ENCODE measurements at regions of chr15 and their contacts with region 1.

Region 1: GRCh38 chr15:92082006-92082843 is 228.7 kb downstream of the SLCO3A1 start:
- DNase-seq: peak; percentile 55
- H3K4me3 ChIP-seq: no peak overlapping the region
- CTCF ChIP-seq: peak; percentile 90

Region 2: GRCh38 chr15:91706322-91707032 is 375.7 kb before region 1 on chr15:
- in situ Hi-C with region 1: loop called (anchors 10 kb)
- DNase-seq: peak; percentile 35
- H3K4me3 ChIP-seq: no peak overlapping the region
- CTCF ChIP-seq: peak; percentile 94

Region 3: DNA sequence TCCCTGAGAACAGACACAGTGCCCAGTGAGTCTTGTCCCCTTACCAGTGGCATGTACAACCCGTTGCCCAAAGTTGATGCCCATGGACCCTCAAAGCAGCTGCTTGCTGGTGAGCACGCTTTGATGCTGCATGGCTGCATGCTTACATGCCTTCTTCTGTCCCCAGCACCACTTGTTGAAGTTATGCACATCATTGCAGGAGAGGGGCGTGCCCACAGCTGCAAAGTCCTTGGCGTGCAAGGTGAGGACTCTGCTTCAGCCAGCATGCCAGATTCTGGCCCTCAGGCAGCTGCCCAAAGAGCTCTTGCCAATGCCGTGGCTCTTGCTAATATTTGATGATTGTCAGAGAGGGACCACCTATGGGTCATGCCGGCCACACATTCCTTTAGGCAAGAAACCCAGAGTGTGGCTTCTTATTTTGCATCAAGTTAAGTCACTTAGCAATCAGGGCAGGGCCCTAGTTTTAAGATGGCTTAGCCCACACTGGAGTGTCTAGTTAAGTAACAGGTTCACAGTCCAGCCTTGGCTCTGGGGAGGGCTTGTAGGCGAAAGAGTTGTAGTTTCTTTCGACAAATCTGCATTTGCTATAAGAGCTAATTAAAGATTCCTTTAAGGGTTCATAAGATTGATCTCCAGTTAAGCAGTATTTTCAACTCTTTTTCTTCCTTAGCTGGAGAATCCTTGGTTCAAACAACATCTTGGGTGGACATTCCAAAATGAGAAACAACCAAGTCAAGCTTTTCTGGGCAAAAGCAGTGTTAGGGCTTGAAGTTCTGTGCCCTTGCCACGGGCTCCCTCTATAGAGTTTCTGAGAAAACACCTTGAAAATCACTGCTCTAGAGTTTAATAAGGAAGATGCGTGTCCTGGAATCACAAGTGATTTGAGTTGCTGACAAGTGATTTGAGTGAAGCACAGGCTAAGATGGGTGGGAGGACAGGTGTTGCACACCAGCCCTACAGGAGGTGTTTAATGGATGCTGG is 100.1 kb before region 1 on chr15:
- in situ Hi-C with region 1: loop called (anchors 5 kb)
- DNase-seq: no peak
- H3K4me3 ChIP-seq: no peak overlapping the region
- CTCF ChIP-seq: peak; percentile 1

Measured in astrocyte of the cerebellum (primary cell).